Naive thymus-derived CD4-positive, alpha-beta T cell (primary cell): ENCODE measurements at regions of chr1 and their contacts with region 1.

Region 1: GRCh38 chr1:173867753-173868265 is at the start of gene GAS5:
- DNase-seq: peak; percentile 88 to 100 (median 99)
- ATAC-seq: peak; percentile 92
- H3K4me3 ChIP-seq: peak within 1 kb of the TSS; percentile 88
- H3K4me3 Mint-ChIP-seq: peak within 1 kb of the TSS; percentile 92 to 98 (median 95)
- H3K27ac ChIP-seq: peak within 1 kb of the TSS; percentile 93
- H3K27ac Mint-ChIP-seq: peak within 1 kb of the TSS; percentile 85 to 99 (median 97)
- H3K4me1 ChIP-seq: peaks cover 42 to 62% of the 10 kb centered on the region in 2 donors
- H3K4me1 Mint-ChIP-seq: peaks cover 50 to 80% (median 66%) of the 10 kb centered on the region in 7 donors
- H3K27me3 ChIP-seq: no peaks in the 10 kb centered on the region
- H3K27me3 Mint-ChIP-seq: peaks cover 0 to 4% (median 0%) of the 10 kb centered on the region in 5 donors
- total RNA-seq, gene GAS5: 371 to 954 (median 885) TPM

Region 2: DNA sequence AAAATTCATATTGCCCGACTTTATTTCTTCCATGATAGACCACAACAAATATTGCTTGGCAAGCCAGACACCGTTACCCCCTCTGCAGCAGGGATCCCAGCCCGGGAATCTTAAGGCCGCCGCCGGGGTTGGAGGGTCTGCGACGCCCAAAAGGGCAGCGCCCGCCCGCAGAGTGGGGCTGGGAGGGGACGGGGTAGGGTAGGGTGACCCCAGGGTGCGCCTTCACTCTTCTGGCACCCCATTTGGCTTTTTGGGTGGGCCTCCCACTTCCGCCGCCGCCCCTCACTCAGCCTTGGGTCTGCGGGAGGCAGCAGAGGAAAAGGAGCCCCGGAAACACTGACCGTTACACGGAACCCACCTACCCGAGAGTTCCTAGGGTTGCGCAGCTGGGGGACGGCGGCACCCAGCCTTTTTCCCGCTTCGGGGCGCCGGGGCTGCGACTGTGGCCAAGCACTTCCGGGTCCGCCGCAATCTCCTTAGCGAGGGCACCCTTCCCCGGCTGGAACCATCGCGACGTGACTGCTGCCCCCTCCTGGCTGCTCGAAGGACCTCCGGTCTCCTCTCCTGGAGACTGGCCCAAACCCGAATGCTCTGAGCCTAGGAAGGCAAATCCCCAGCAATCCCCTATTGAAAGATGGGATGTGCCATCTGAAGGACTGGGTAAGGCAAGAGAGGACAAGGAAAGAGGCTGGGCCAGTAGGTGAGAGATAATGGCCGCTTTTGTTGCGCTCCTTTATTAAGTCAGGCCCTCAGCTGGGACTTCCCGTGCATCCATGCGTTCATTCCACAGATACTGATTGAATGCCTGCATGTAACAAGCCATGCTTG is 1424.0 kb before region 1 on chr1 and contains the start of gene PIGC:
- CTCF ChIA-PET with region 1: no interaction called
- POLR2A ChIA-PET with region 1: no interaction called
- intact Hi-C with region 1: loop called in 1 of 2 experiments (anchors 5 kb)
- DNase-seq: peak; percentile 78 to 89 (median 87)
- ATAC-seq: peak; percentile 100
- H3K4me3 ChIP-seq: peak within 1 kb of the TSS; percentile 72
- H3K4me3 Mint-ChIP-seq: peak within 1 kb of the TSS; percentile 87 to 98 (median 94)
- H3K27ac ChIP-seq: peak within 1 kb of the TSS; percentile 83
- H3K27ac Mint-ChIP-seq: peak within 1 kb of the TSS; percentile 91 to 97 (median 93)
- H3K4me1 ChIP-seq: peaks cover 15 to 25% of the 10 kb centered on the region in 2 donors
- H3K4me1 Mint-ChIP-seq: peaks cover 27 to 53% (median 47%) of the 10 kb centered on the region in 7 donors
- H3K27me3 ChIP-seq: no peaks in the 10 kb centered on the region
- H3K27me3 Mint-ChIP-seq: no peaks in the 10 kb centered on the region
- total RNA-seq, gene PIGC: 21.1 to 57.4 (median 25.1) TPM

Region 3: GRCh38 chr1:173392895-173393658 is 474.7 kb before region 1 on chr1:
- CTCF ChIA-PET with region 1: no interaction called
- POLR2A ChIA-PET with region 1: no interaction called
- intact Hi-C with region 1: no loop called
- DNase-seq: no peak
- ATAC-seq: no peak
- H3K4me3 ChIP-seq: no peak overlapping the region
- H3K4me3 Mint-ChIP-seq: no peak overlapping the region
- H3K27ac ChIP-seq: no peak overlapping the region
- H3K27ac Mint-ChIP-seq: no peak overlapping the region
- H3K4me1 ChIP-seq: no peaks in the 10 kb centered on the region
- H3K4me1 Mint-ChIP-seq: no peaks in the 10 kb centered on the region
- H3K27me3 ChIP-seq: no peaks in the 10 kb centered on the region
- H3K27me3 Mint-ChIP-seq: no peaks in the 10 kb centered on the region

Region 4: GRCh38 chr1:173476664-173477285 is 391.0 kb before region 1 on chr1:
- CTCF ChIA-PET with region 1: interaction called, 3 read pairs
- POLR2A ChIA-PET with region 1: interaction called, 20 read pairs
- intact Hi-C with region 1: loop called (anchors 1 kb)
- DNase-seq: peak; percentile 65 to 82 (median 78)
- ATAC-seq: peak; percentile 87
- H3K4me3 ChIP-seq: peak overlapping the region; percentile 92
- H3K4me3 Mint-ChIP-seq: peak overlapping the region; percentile 82 to 94 (median 91)
- H3K27ac ChIP-seq: peak overlapping the region; percentile 78
- H3K27ac Mint-ChIP-seq: peak overlapping the region; percentile 61 to 96 (median 89)
- H3K4me1 ChIP-seq: peaks cover 20 to 31% of the 10 kb centered on the region in 2 donors
- H3K4me1 Mint-ChIP-seq: peaks cover 38 to 72% (median 63%) of the 10 kb centered on the region in 7 donors
- H3K27me3 ChIP-seq: no peaks in the 10 kb centered on the region
- H3K27me3 Mint-ChIP-seq: no peaks in the 10 kb centered on the region

Region 5: GRCh38 chr1:173824331-173825081 is 43.3 kb before region 1 on chr1 and contains the starts of genes CENPL and DARS2:
- CTCF ChIA-PET with region 1: no interaction called
- POLR2A ChIA-PET with region 1: interaction called, 28 read pairs
- intact Hi-C with region 1: loop called (anchors 1 kb)
- DNase-seq: peak; percentile 67 to 93 (median 91)
- ATAC-seq: peak; percentile 94
- H3K4me3 ChIP-seq: peak within 1 kb of the TSS; percentile 99
- H3K4me3 Mint-ChIP-seq: peak within 1 kb of the TSS; percentile 87 to 99 (median 94)
- H3K27ac ChIP-seq: peak within 1 kb of the TSS; percentile 80
- H3K27ac Mint-ChIP-seq: peak within 1 kb of the TSS; percentile 91 to 98 (median 96)
- H3K4me1 ChIP-seq: peaks cover 10 to 14% of the 10 kb centered on the region in 2 donors
- H3K4me1 Mint-ChIP-seq: peaks cover 32 to 68% (median 50%) of the 10 kb centered on the region in 7 donors
- H3K27me3 ChIP-seq: no peaks in the 10 kb centered on the region
- H3K27me3 Mint-ChIP-seq: no peaks in the 10 kb centered on the region
- total RNA-seq, gene CENPL: 5.2 to 25.1 (median 9.5) TPM
- total RNA-seq, gene DARS2: 3.6 to 26.0 (median 13.5) TPM

Region 6: GRCh38 chr1:173954179-173954578 is 86.4 kb after region 1 on chr1:
- CTCF ChIA-PET with region 1: no interaction called
- POLR2A ChIA-PET with region 1: interaction called, 3 read pairs
- intact Hi-C with region 1: loop called in 1 of 2 experiments (anchors 5 kb)
- DNase-seq: no peak
- ATAC-seq: no peak
- H3K4me3 ChIP-seq: no peak overlapping the region
- H3K4me3 Mint-ChIP-seq: no peak overlapping the region
- H3K27ac ChIP-seq: no peak overlapping the region
- H3K27ac Mint-ChIP-seq: no peak overlapping the region
- H3K4me1 ChIP-seq: no peaks in the 10 kb centered on the region
- H3K4me1 Mint-ChIP-seq: peaks cover 0 to 18% (median 17%) of the 10 kb centered on the region in 7 donors
- H3K27me3 ChIP-seq: no peaks in the 10 kb centered on the region
- H3K27me3 Mint-ChIP-seq: no peaks in the 10 kb centered on the region

Region 7: DNA sequence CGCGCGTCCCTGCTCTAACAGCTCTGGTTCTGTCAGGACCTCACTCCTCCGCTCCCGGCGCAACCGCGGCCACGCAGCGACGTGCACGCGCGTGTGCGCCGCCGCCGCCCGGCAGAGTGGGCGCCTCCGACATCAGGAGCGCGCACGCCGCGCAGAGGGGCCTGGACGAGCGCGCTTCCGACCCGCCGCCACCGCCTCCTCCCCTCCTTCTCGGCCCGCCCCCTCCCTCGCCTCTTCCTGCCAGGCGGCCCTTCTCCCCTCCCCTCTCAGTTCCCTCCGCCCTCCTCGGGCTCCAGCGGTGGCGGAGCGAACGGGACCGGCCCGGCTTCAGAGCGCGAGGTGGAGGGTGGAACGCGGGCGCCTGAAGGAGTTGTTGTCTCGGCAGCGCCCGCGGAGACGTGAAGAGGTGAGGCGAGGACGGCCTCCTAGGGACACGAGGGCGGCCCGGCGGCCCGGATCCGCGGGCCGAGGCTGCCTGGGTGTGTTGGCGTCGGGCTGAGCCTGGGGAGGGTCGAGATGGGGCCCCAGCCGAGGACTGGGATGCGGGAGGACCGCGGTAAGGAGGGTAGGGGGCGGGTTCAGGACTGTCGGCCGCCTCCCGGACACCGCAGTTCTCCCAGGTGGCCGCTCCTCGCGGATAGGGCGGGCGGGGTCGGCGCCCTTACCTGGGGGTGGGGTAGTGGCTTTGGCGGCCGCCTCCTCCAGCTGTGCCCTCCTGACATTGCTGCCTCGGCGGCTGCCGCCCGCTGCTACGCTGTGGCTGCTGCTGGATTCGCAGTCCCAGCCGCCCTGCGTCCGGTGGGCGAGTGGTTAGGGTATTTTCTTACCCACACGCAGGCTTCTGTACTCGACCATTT is 291.7 kb after region 1 on chr1 and contains the start of gene RABGAP1L:
- CTCF ChIA-PET with region 1: interaction called, 5 read pairs
- POLR2A ChIA-PET with region 1: interaction called, 16 read pairs
- intact Hi-C with region 1: loop called (anchors 1 kb)
- DNase-seq: peak; percentile 87 to 95 (median 93)
- ATAC-seq: peak; percentile 96
- H3K4me3 ChIP-seq: peak within 1 kb of the TSS; percentile 72
- H3K4me3 Mint-ChIP-seq: peak within 1 kb of the TSS; percentile 92 to 100 (median 96)
- H3K27ac ChIP-seq: peak within 1 kb of the TSS; percentile 87
- H3K27ac Mint-ChIP-seq: peak within 1 kb of the TSS; percentile 86 to 98 (median 98)
- H3K4me1 ChIP-seq: peaks cover 9 to 20% of the 10 kb centered on the region in 2 donors
- H3K4me1 Mint-ChIP-seq: peaks cover 31 to 59% (median 53%) of the 10 kb centered on the region in 7 donors
- H3K27me3 ChIP-seq: no peaks in the 10 kb centered on the region
- H3K27me3 Mint-ChIP-seq: no peaks in the 10 kb centered on the region
- total RNA-seq, gene RABGAP1L: 51.9 to 97.4 (median 74.3) TPM

Region 8: GRCh38 chr1:175192630-175193526 is 1325.1 kb after region 1 on chr1 and contains the start of gene KIAA0040:
- CTCF ChIA-PET with region 1: no interaction called
- POLR2A ChIA-PET with region 1: no interaction called
- intact Hi-C with region 1: loop called (anchors 1 to 5 kb)
- DNase-seq: peak; percentile 25 to 66 (median 40)
- ATAC-seq: peak; percentile 78
- H3K4me3 ChIP-seq: peak within 1 kb of the TSS; percentile 90
- H3K4me3 Mint-ChIP-seq: peak within 1 kb of the TSS; percentile 89 to 100 (median 97)
- H3K27ac ChIP-seq: peak within 1 kb of the TSS; percentile 80
- H3K27ac Mint-ChIP-seq: peak within 1 kb of the TSS; percentile 73 to 97 (median 92)
- H3K4me1 ChIP-seq: peaks cover 38 to 43% of the 10 kb centered on the region in 2 donors
- H3K4me1 Mint-ChIP-seq: peaks cover 40 to 67% (median 53%) of the 10 kb centered on the region in 7 donors
- H3K27me3 ChIP-seq: no peaks in the 10 kb centered on the region
- H3K27me3 Mint-ChIP-seq: no peaks in the 10 kb centered on the region
- total RNA-seq, gene KIAA0040: 21.7 to 88.1 (median 27.0) TPM